ENCODE measurements at regions of chr3 and their contacts with region 1.

Region 1: DNA sequence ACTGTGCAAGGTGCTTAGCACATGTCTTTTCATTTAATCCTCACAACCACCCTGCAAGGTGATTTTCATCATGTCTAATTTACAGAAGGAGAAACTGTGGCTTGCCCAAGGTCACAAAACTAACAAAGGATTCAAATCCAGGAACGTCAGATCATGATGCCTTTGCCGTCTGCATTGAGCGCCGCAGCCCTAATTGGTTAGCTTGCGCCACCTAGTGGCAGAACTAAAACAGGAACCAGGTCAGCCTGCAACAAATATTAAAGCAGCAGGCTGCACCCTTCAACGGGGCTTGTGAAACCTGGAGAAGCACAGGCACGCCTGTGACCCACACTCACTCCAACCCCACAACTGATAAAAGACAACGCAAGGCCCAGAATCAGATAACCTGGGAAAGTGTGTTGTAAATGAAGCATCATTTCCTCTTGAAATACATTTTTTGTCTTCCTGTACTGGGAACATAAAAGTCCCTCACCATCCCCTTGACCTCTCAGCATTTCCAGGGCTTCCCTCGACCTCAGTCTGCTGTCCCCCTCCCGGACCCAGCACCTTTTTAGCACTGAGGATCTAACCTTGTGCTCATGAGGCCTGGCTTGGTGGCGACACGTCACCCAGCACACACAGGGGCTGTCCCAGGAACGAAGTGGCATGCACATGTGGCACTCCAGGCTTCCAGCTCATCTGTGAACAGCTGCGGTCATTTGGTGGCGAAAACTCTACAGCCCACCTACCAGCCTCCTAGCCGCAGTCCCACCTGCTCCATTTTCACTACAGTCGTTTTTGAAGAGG is 17.3 kb downstream of the DPH3 start:
- DNase-seq: peak; percentile 55 to 80 (median 72)
- ATAC-seq: peak; percentile 93
- H3K4me3 ChIP-seq: no peak overlapping the region
- H3K4me3 Mint-ChIP-seq: peak overlapping the region in 3 of 10 donors; percentile 4 to 37 (median 21)
- H3K27ac ChIP-seq: no peak overlapping the region
- H3K27ac Mint-ChIP-seq: peak overlapping the region in 2 of 9 donors; percentile 7 to 41
- H3K4me1 ChIP-seq: no peaks in the 10 kb centered on the region
- H3K4me1 Mint-ChIP-seq: peaks cover 0 to 32% (median 8%) of the 10 kb centered on the region in 7 donors
- H3K27me3 ChIP-seq: no peaks in the 10 kb centered on the region
- H3K27me3 Mint-ChIP-seq: no peaks in the 10 kb centered on the region

Region 2: GRCh38 chr3:15108082-15108545 is 1139.4 kb before region 1 on chr3:
- CTCF ChIA-PET with region 1: no interaction called
- POLR2A ChIA-PET with region 1: no interaction called
- intact Hi-C with region 1: loop called (anchors 1 to 5 kb)
- DNase-seq: peak; percentile 51 to 78 (median 63)
- ATAC-seq: peak; percentile 97
- H3K4me3 ChIP-seq: no peak overlapping the region
- H3K4me3 Mint-ChIP-seq: peak overlapping the region in 1 of 10 donors; percentile 29
- H3K27ac ChIP-seq: no peak overlapping the region
- H3K27ac Mint-ChIP-seq: peak overlapping the region in 2 of 9 donors; percentile 31 to 38
- H3K4me1 ChIP-seq: peaks cover 3 to 5% of the 10 kb centered on the region in 2 donors
- H3K4me1 Mint-ChIP-seq: peaks cover 3 to 9% (median 6%) of the 10 kb centered on the region in 7 donors
- H3K27me3 ChIP-seq: no peaks in the 10 kb centered on the region
- H3K27me3 Mint-ChIP-seq: peaks cover 4 to 17% (median 5%) of the 10 kb centered on the region in 5 donors

Region 3: DNA sequence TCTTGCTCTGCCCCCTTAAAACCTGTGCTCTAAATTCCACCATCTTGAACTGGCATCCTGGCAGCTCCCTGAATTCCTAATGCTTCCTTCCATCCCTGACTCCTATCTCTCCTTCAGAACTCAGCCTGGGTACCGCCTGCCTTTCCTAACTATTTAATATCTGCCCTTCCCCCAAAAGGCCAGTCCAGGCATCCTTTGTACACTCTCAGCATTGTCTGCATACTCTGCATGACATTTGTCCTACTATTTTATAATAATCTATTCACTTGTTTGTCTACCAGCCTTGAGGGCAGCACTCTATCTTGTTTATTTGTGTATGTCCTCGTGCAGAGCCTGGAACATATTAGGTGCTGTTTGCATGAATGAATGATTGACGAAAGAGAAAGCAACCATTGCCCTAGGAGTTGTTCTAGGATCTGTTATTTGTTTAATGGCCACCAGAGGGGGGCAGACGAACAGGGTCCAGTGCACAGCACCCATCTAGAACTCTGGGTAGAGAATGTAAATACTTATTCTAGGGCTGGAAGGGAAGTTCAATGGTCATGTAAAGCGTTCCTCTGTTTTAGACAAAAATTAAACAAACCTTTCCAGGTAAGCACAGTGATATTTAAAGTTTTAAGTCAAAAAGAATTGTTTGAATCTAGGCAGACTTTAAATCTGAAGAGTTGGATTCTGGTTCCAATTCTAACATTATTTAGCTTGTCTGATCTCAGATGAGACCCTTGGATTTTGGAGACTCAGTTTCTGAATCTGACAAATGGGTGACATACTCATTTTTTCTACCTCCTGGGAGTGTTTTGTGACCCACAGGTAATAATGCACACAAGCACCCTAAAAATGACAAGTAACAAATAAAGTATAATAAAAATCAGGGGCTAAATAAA is 198.8 kb before region 1 on chr3:
- CTCF ChIA-PET with region 1: interaction called, 4 read pairs
- POLR2A ChIA-PET with region 1: no interaction called
- intact Hi-C with region 1: loop called (anchors 1 kb)
- DNase-seq: peak in 7 of 9 donors; percentile 11 to 53 (median 43)
- ATAC-seq: peak; percentile 92
- H3K4me3 ChIP-seq: no peak overlapping the region
- H3K4me3 Mint-ChIP-seq: peak overlapping the region in 5 of 10 donors; percentile 4 to 72 (median 48)
- H3K27ac ChIP-seq: no peak overlapping the region
- H3K27ac Mint-ChIP-seq: no peak overlapping the region
- H3K4me1 ChIP-seq: no peaks in the 10 kb centered on the region
- H3K4me1 Mint-ChIP-seq: peaks cover 0 to 5% (median 4%) of the 10 kb centered on the region in 7 donors
- H3K27me3 ChIP-seq: no peaks in the 10 kb centered on the region
- H3K27me3 Mint-ChIP-seq: peaks cover 0 to 5% (median 0%) of the 10 kb centered on the region in 5 donors

Region 4: DNA sequence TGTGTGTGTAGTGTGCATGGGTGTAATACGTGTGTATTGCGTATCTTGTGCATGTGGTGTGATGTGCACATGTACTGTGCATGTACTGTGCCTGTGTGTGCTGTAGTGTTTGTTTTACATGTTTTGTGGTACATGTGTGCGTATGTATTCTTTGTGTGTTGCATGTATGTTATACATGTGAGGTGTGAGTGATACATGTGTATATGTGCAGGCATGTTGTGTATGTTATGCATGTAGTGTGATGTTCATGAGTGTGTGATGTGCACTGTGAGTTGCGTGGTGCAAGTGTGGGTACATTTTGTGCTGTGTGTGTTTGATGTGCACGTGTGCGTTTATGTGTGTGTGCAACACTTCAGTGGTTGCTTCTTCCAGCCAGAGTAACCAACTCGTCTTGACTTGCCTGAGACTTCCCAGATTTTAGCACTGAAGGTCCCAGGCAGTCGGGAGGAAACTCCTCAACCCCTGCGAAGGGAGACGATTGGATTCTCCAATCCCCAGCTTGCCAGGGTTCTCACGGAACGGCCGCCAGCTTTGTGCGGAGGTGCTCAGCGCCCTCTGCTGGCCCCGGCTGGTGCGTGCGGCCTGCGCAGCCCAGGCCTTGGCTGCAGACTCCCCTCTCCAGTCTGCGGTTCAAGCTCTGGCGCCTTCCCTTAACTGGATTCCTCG is 69.4 kb before region 1 on chr3:
- CTCF ChIA-PET with region 1: no interaction called
- POLR2A ChIA-PET with region 1: no interaction called
- intact Hi-C with region 1: loop called in 1 of 2 experiments (anchors 1 kb)
- DNase-seq: peak; percentile 10 to 72 (median 48)
- ATAC-seq: peak; percentile 75
- H3K4me3 ChIP-seq: no peak overlapping the region
- H3K4me3 Mint-ChIP-seq: peak overlapping the region in 2 of 10 donors; percentile 38 to 39
- H3K27ac ChIP-seq: no peak overlapping the region
- H3K27ac Mint-ChIP-seq: peak overlapping the region in 1 of 9 donors; percentile 40
- H3K4me1 ChIP-seq: no peaks in the 10 kb centered on the region
- H3K4me1 Mint-ChIP-seq: peaks cover 0 to 7% (median 5%) of the 10 kb centered on the region in 7 donors
- H3K27me3 ChIP-seq: no peaks in the 10 kb centered on the region
- H3K27me3 Mint-ChIP-seq: peaks cover 9 to 23% (median 19%) of the 10 kb centered on the region in 5 donors

Region 5: DNA sequence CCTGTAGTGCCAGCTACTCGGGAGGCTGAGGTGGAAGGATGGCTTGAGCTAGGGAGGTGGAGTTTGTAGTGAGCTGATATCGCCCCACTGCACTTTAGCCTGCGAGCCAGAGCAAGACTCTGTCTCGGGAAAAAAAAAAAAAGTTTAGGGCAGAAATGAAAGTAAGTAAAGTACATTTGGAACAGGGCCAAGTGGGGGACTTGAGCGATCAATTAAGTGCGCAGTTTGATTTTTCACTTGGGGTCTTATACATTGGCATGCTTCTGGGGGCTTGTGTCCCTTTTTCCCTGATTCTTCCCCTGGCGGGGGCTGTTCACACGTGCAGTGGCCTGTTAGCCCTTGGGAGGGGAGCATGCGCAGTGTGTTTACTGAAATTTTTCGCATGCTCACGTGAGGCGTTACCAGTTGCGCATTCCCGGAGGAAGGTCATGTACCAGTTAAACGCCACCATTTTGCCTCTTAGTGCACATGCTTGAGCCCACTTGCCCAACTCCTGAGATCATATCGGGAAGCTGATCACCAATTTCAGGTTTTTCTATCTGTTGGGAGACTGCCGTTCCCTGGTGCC is 31.0 kb before region 1 on chr3:
- CTCF ChIA-PET with region 1: no interaction called
- POLR2A ChIA-PET with region 1: no interaction called
- intact Hi-C with region 1: no loop called
- DNase-seq: no peak
- ATAC-seq: no peak
- H3K4me3 ChIP-seq: no peak overlapping the region
- H3K4me3 Mint-ChIP-seq: no peak overlapping the region
- H3K27ac ChIP-seq: no peak overlapping the region
- H3K27ac Mint-ChIP-seq: no peak overlapping the region
- H3K4me1 ChIP-seq: no peaks in the 10 kb centered on the region
- H3K4me1 Mint-ChIP-seq: no peaks in the 10 kb centered on the region
- H3K27me3 ChIP-seq: no peaks in the 10 kb centered on the region
- H3K27me3 Mint-ChIP-seq: peaks cover 0 to 2% (median 0%) of the 10 kb centered on the region in 5 donors

Measured in naive thymus-derived CD4-positive, alpha-beta T cell (primary cell).